Activated CD4-positive, alpha-beta T cell treated with anti-CD3 and anti-CD28 coated beads for 36 hours (primary cell): ENCODE measurements at regions of chr19 and their contacts with region 1.

Region 1: GRCh38 chr19:55503502-55504251 is 15.4 kb downstream of the SSC5D start:
- DNase-seq: peak; percentile 96
- ATAC-seq: peak; percentile 97
- H3K4me3 Mint-ChIP-seq: peak overlapping the region; percentile 65
- H3K27ac Mint-ChIP-seq: peak overlapping the region; percentile 67
- H3K4me1 Mint-ChIP-seq: peaks cover 19% of the 10 kb centered on the region
- H3K27me3 Mint-ChIP-seq: no peaks in the 10 kb centered on the region

Region 2: GRCh38 chr19:55146078-55146704 is 357.5 kb before region 1 on chr19:
- CTCF ChIA-PET with region 1: interaction called, 12 read pairs
- POLR2A ChIA-PET with region 1: no interaction called
- intact Hi-C with region 1: loop called (anchors 1 to 10 kb)
- DNase-seq: peak; percentile 59
- ATAC-seq: peak; percentile 23
- H3K4me3 Mint-ChIP-seq: no peak overlapping the region
- H3K27ac Mint-ChIP-seq: no peak overlapping the region
- H3K4me1 Mint-ChIP-seq: peaks cover 2% of the 10 kb centered on the region
- H3K27me3 Mint-ChIP-seq: peaks cover 23% of the 10 kb centered on the region

Region 3: DNA sequence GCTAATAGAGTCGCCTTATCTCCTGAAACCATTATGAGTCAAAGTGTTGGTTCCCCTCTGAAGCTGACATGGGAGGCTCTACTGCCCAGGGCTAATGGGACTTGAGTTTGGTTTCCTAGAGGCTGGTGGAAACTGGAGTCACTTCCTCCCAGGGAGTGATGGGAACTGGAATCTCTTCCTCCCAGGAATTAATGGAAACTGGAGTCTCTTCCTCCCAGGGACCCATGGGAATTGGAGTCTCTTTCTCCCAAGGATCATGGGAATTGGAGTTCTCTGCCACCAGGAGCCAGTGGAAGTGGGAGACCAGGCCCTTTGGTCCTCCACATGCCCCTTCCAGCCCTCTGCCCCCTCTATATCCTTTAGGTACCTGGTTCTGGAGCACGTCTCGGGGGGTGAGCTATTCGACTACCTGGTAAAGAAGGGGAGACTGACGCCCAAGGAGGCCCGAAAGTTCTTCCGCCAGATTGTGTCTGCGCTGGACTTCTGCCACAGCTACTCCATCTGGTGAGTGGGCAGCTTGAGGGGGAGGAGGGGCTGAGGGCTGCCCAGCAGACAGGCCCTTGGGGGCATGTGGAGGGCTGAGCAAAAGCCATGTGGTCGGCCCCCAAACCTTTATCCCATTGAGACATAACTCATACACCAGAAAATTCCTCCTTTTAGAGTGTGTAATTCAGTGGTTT is 214.4 kb before region 1 on chr19:
- CTCF ChIA-PET with region 1: interaction called, 5 read pairs
- POLR2A ChIA-PET with region 1: interaction called, 5 read pairs
- intact Hi-C with region 1: loop called in 1 of 2 experiments (anchors 2 kb)
- DNase-seq: no peak
- ATAC-seq: no peak
- H3K4me3 Mint-ChIP-seq: no peak overlapping the region
- H3K27ac Mint-ChIP-seq: no peak overlapping the region
- H3K4me1 Mint-ChIP-seq: peaks cover 6% of the 10 kb centered on the region
- H3K27me3 Mint-ChIP-seq: no peaks in the 10 kb centered on the region

Region 4: DNA sequence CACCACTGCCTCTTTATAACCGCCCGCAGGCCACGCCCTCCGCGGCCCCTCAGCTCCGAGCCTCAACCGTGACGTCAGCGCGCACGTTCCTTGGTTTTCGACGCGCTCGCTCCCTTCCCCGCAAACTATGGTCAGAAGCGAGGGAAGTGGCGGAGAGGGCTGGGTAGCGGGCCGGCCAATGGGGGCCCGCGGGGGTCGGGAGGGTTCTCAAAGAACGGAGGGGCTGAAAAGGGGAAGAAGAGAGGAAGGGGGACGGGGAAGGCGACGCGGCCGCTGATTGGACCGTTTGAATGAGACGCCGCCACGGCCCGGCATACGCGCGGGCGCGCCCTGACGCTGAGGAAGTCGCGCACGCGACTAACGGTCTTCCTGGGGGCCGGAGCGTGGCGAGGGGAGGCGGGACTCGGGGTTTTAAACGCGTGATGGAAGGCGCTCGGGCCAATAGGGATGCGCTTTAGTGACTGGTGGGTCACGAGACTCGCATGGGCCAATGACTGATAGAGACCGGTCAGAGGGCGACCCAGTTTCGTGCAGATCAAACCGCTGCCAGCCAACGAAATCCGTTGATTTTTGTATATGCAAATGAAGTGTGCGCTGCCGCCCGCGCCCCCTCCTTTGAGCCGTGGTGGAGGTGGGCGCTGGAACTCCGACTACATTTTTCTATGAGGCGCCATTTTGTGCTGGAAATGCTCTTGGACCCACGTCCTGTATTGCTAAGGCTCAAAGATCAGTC is 95.7 kb before region 1 on chr19:
- CTCF ChIA-PET with region 1: interaction called, 3 read pairs
- POLR2A ChIA-PET with region 1: interaction called, 5 read pairs
- intact Hi-C with region 1: loop called in 1 of 2 experiments (anchors 1 kb)
- DNase-seq: peak; percentile 98
- ATAC-seq: peak; percentile 96
- H3K4me3 Mint-ChIP-seq: peak overlapping the region; percentile 90
- H3K27ac Mint-ChIP-seq: peak overlapping the region; percentile 96
- H3K4me1 Mint-ChIP-seq: peaks cover 22% of the 10 kb centered on the region
- H3K27me3 Mint-ChIP-seq: no peaks in the 10 kb centered on the region

Region 5: DNA sequence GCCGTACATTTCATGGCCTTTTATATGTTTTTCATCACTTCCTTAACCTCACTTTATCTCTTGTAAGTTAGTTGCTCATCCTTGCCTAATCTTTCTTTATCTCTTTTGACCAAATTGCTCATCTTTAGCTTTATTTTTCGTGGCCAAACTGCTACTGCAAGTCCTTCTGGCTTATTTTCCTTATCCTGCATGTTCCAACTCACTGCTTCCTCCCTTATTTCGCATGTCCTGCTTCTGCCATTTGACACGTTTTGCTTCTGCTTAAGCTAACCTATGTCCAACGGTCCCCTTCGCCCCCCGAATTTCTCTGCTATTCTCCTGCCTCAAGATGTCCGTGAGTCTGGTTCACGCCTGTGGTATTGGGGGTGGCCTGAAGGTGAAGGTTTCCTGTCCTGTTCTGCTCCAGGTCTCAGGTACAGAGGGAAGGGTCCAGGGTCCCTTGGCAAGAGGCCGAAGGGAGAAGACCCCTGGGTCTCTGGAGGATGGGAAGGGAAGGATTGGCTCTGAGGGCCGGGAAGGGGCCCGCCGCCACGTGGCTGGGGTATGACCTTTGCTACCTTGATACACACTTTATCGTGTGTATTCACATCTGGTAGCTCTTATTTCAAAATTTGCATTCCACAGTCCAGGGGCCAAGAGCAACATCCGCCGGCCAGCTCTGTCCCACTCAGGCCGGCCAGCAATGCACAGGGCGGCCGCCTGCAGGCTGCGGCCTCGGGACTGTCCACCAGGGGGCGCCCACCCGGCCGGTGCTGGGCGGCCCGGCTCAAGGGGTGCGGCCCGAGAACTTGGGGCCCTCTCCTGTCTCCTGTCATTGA is 36.2 kb before region 1 on chr19:
- CTCF ChIA-PET with region 1: interaction called, 30 read pairs
- POLR2A ChIA-PET with region 1: no interaction called
- intact Hi-C with region 1: loop called (anchors 1 kb)
- DNase-seq: peak; percentile 83
- ATAC-seq: peak; percentile 98
- H3K4me3 Mint-ChIP-seq: no peak overlapping the region
- H3K27ac Mint-ChIP-seq: no peak overlapping the region
- H3K4me1 Mint-ChIP-seq: peaks cover 3% of the 10 kb centered on the region
- H3K27me3 Mint-ChIP-seq: no peaks in the 10 kb centered on the region

Region 6: GRCh38 chr19:55516878-55517620 is 13.4 kb after region 1 on chr19:
- CTCF ChIA-PET with region 1: interaction called, 11 read pairs
- POLR2A ChIA-PET with region 1: no interaction called
- intact Hi-C with region 1: no loop called
- DNase-seq: peak; percentile 96
- ATAC-seq: peak; percentile 100
- H3K4me3 Mint-ChIP-seq: peak overlapping the region; percentile 54
- H3K27ac Mint-ChIP-seq: peak overlapping the region; percentile 9
- H3K4me1 Mint-ChIP-seq: peaks cover 3% of the 10 kb centered on the region
- H3K27me3 Mint-ChIP-seq: no peaks in the 10 kb centered on the region